ENCODE measurements at regions of chr6 and their contacts with region 1.

Region 1: GRCh38 chr6:148935705-148936435 is 189.0 kb downstream of the UST start:
- DNase-seq: no peak
- H3K4me3 ChIP-seq: no peak overlapping the region
- CTCF ChIP-seq: no peak

Region 2: GRCh38 chr6:148724428-148724827 is 211.4 kb before region 1 on chr6:
- in situ Hi-C with region 1: no loop called
- DNase-seq: no peak
- H3K4me3 ChIP-seq: no peak overlapping the region
- CTCF ChIP-seq: no peak

Region 3: GRCh38 chr6:148874698-148875293 is 61.1 kb before region 1 on chr6:
- in situ Hi-C with region 1: loop called (anchors 5 kb)
- DNase-seq: peak; percentile 88
- H3K4me3 ChIP-seq: no peak overlapping the region
- CTCF ChIP-seq: no peak

Region 4: DNA sequence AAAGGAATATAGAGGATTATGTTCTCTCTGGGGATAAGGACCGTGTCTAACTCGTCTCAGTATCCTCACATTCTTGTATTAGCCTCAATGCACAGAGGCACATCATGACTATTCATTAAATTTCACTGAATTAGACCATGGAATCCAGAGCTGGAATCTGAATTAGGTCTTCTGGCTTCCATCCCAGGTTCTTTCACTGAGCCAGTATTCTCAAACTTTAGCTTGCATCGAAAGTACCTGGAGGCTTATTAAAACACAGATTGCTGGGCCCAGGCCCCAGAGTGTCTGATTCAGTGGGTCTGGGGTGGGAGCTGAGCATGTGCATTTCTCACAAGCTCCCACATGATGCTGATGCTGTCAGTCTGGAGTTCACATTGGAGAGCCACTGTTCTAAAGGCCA is 47.0 kb before region 1 on chr6:
- in situ Hi-C with region 1: no loop called
- DNase-seq: peak; percentile 86
- H3K4me3 ChIP-seq: no peak overlapping the region
- CTCF ChIP-seq: no peak

Region 5: GRCh38 chr6:149190224-149190831 is 254.5 kb after region 1 on chr6:
- in situ Hi-C with region 1: no loop called
- DNase-seq: no peak
- H3K4me3 ChIP-seq: no peak overlapping the region
- CTCF ChIP-seq: no peak